ENCODE measurements at regions of chr6 and their contacts with region 1.

Region 1: GRCh38 chr6:11460001-11460668 is 77.4 kb upstream of the TMEM170B start:
- H3K4me3 ChIP-seq: no peak overlapping the region
- H3K27ac ChIP-seq: no peak overlapping the region
- H3K4me1 ChIP-seq: no peaks in the 10 kb centered on the region; the same call in 1 of the 2 replicates
- CTCF ChIP-seq: no peak

Region 2: GRCh38 chr6:11473008-11473740 is 13.0 kb after region 1 on chr6:
- CTCF ChIA-PET with region 1: interaction called, 11 read pairs
- POLR2A ChIA-PET with region 1: no interaction called
- H3K4me3 ChIP-seq: no peak overlapping the region
- H3K27ac ChIP-seq: no peak overlapping the region
- H3K4me1 ChIP-seq: no peaks in the 10 kb centered on the region
- CTCF ChIP-seq: no peak

Region 3: DNA sequence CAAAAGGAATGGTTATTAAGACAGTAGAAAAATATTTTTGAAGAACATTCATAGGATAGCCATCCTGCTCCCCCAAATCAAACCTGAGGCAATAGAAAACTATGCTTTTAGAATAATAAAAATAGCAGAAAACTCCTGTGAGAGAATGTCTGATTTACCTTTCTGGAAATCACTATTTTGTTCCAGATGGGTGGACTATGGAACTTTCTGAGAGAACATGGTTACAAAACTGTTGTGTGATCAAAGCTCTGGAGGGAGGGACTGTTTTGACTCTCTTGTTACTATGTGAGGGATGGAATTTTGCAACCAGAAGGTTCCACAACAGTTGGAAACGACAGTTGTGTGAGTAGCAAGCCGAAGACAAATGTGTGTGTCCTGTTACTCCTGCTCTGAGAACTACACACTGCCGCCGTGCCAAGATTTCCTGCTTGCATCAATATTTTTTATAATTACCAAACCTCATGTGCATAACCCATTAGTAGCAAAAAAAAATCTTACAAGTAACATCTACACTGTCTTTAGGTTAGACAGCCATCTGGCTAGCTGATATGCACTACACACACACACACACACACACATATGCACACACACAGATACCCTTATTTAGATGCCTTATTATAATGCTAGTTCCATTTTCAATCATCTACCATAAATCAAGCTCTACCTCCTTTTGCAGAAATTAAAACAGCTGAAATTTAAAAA is 541.0 kb after region 1 on chr6:
- CTCF ChIA-PET with region 1: no interaction called
- POLR2A ChIA-PET with region 1: no interaction called
- H3K4me3 ChIP-seq: no peak overlapping the region
- H3K27ac ChIP-seq: no peak overlapping the region
- H3K4me1 ChIP-seq: no peaks in the 10 kb centered on the region
- CTCF ChIP-seq: no peak